ENCODE measurements at regions of chr16 and their contacts with region 1.

Region 1: GRCh38 chr16:75555707-75556430 is at the start of gene TMEM231:
- DNase-seq: peak; percentile 92
- H3K4me3 ChIP-seq: peak within 1 kb of the TSS; percentile 73 to 88 (median 76)
- H3K27ac ChIP-seq: peak within 1 kb of the TSS; percentile 82
- H3K4me1 ChIP-seq: peaks cover 11% of the 10 kb centered on the region
- H3K27me3 ChIP-seq: no peaks in the 10 kb centered on the region
- CTCF ChIP-seq: no peak
- total RNA-seq, gene TMEM231: 13.8 to 21.2 TPM

Region 2: DNA sequence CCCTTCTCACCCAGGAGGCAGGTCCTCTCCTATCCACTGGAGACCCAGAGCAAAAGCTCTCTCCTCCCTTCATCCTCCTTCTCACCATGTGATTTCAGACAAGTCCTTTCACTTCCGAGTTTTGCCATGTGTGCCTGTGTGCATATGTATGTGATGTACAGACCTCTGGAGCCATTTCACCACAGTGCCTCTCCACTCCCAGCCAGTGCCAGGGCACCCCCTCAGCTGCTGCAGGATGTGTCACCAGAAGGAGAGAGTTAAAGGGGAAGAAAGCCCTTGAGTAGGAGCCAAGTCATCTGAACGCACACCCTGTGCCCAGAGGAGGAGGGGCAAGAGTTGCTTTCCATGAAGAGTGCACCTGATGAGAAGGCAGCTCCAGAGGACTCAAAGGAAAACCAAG is 77.8 kb before region 1 on chr16:
- CTCF ChIA-PET with region 1: no interaction called
- dilution Hi-C with region 1: loop called (anchors 5 kb)
- in situ Hi-C with region 1: no loop called
- intact Hi-C with region 1: no loop called
- DNase-seq: peak; percentile 52
- H3K4me3 ChIP-seq: no peak overlapping the region
- H3K27ac ChIP-seq: no peak overlapping the region
- H3K4me1 ChIP-seq: peaks cover 33% of the 10 kb centered on the region
- H3K27me3 ChIP-seq: no peaks in the 10 kb centered on the region
- CTCF ChIP-seq: no peak

Region 3: GRCh38 chr16:75495076-75495674 is 60.7 kb before region 1 on chr16 and contains the start of gene CHST6:
- CTCF ChIA-PET with region 1: no interaction called
- dilution Hi-C with region 1: no loop called
- in situ Hi-C with region 1: no loop called
- intact Hi-C with region 1: no loop called
- DNase-seq: peak; percentile 45
- H3K4me3 ChIP-seq: peak within 1 kb of the TSS; percentile 35 to 59 (median 45)
- H3K27ac ChIP-seq: no peak within 1 kb of the TSS
- H3K4me1 ChIP-seq: peaks cover 18% of the 10 kb centered on the region
- H3K27me3 ChIP-seq: no peaks in the 10 kb centered on the region
- CTCF ChIP-seq: no peak
- total RNA-seq, gene CHST6: 1.3 to 8.0 TPM

Region 4: GRCh38 chr16:75566040-75566810 is 10.4 kb after region 1 on chr16 and contains the start of gene GABARAPL2:
- CTCF ChIA-PET with region 1: interaction called, 3 read pairs
- dilution Hi-C with region 1: no loop called
- in situ Hi-C with region 1: no loop called
- intact Hi-C with region 1: loop called (anchors 1 kb)
- DNase-seq: peak; percentile 70
- H3K4me3 ChIP-seq: peak within 1 kb of the TSS; percentile 73 to 87 (median 78)
- H3K27ac ChIP-seq: peak within 1 kb of the TSS; percentile 69
- H3K4me1 ChIP-seq: peaks cover 11% of the 10 kb centered on the region
- H3K27me3 ChIP-seq: no peaks in the 10 kb centered on the region
- CTCF ChIP-seq: no peak
- total RNA-seq, gene GABARAPL2: 41.2 to 63.2 TPM

Region 5: DNA sequence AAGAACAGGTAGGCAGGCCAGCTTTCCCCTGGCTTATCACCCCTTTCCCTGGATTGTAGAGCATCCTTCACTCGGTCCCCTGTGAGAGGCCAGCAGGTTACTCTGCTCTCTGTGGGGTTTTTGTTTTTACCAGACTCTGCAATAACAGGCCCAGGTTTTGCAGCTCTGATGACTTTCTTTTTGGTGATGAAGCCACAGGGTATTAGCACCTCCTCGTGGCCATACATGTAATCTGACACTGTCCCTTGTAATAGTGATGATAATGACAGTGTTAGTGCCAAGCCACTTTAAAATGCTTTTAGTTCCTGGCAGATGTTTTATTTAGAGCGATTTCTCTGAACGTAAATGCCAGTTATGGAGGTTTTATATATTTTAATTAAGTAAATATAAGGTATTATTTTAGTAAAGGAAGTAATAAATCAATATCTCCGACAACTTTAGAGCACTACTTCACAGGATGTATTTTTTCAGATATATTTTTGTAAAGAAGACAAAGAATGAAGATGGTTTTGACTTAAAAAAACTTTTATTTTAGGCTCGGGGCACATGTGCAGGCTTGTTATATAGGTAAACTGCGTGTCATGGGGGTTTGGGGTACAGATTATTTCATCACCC is 208.4 kb after region 1 on chr16:
- CTCF ChIA-PET with region 1: no interaction called
- dilution Hi-C with region 1: no loop called
- in situ Hi-C with region 1: no loop called
- intact Hi-C with region 1: no loop called
- DNase-seq: peak; percentile 53
- H3K4me3 ChIP-seq: no peak overlapping the region
- H3K27ac ChIP-seq: no peak overlapping the region
- H3K4me1 ChIP-seq: no peaks in the 10 kb centered on the region
- H3K27me3 ChIP-seq: no peaks in the 10 kb centered on the region
- CTCF ChIP-seq: peak; percentile 83 to 88

Region 6: DNA sequence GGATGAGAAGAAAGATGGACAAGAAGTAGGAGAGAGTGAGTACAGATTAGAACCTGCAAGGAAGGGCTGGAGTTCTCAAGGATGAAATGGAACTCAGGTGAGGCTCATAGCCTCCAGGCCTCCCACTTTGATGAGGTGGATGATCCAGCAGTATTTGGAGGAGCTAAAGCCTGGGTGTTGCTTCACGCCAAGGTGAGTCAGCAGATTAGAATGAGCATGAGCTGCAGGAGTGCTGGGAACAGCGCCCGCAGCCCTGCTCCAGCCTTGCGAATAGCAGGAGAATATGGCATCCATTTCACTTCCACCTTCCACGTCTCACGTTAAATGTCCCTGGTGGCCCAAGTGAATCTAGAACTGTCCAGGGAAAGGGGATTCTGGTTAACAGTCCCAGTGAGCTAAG is 264.8 kb after region 1 on chr16:
- CTCF ChIA-PET with region 1: no interaction called
- dilution Hi-C with region 1: no loop called
- in situ Hi-C with region 1: no loop called
- intact Hi-C with region 1: no loop called
- DNase-seq: peak; percentile 74
- H3K4me3 ChIP-seq: no peak overlapping the region
- H3K27ac ChIP-seq: no peak overlapping the region
- H3K4me1 ChIP-seq: peaks cover 8% of the 10 kb centered on the region
- H3K27me3 ChIP-seq: no peaks in the 10 kb centered on the region
- CTCF ChIP-seq: no peak

Measured in mammary epithelial cell (primary cell).